Left cardiac atrium (tissue), 4 donors: ENCODE measurements at regions of chr3 and their contacts with region 1.

Region 1: DNA sequence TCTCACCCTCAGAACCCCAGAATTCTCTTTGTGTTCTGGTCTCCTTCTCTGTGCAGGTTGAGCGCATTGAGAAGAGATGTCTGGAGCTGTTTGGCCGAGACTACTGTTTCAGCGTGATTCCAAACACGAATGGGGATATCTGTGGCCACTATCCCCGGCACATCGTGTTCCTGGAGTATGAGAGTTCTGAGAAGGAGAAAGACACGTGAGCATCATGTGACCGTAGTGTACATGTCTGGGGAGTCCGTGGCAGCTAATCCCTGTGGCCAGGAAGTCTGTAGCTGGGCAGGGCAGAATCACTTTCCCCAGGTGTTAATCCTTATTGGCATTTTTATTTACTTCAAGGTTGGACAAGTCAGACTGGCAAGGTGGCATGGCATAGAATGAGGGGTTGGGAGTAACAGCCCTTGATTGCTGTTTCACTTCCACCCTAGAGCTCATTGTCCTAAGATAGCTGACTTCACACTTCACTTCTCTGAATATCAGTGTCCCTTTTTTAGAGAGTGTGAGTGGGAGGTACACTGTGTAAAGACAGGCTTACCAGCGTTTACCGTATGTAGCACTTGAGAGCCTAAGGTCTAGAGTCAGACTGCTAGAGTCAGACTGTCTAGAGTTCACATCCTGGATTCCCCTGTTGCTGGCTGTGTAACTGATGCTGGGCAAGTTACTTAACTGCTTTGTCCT is 4.4 kb downstream of the MTMR14 start:
- DNase-seq: peak; percentile 58
- ATAC-seq: peak; percentile 29 to 33

Region 2: DNA sequence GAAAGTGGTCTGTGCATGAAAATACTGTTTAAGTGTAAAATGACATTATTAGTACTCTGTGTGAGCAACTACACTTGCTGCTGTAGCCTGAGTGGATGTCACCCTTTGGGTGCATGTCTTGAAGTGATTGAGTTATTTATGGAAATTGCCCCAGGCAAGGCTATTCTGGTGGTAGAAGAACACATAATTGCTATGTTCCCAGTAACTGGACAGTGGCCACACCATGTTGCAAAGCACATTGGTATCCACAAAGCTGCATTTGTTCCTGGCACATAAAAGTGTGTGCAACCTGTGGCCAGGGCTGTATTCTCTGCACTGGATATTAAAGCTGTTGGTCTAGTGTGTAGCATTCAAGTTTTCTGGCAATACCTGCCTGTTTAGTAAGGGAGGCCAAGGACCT is 19.4 kb after region 1 on chr3:
- intact Hi-C with region 1: loop called in 1 of 2 experiments (anchors 2 kb)
- DNase-seq: no peak
- ATAC-seq: no peak